ENCODE measurements at regions of chr7 and their contacts with region 1.

Region 1: GRCh38 chr7:2471396-2471795 is 4.8 kb downstream of the GRIFIN start:
- DNase-seq: no peak
- H3K4me3 ChIP-seq: no peak overlapping the region
- CTCF ChIP-seq: no peak

Region 2: GRCh38 chr7:2460188-2460587 is 11.2 kb before region 1 on chr7:
- CTCF ChIA-PET with region 1: interaction called, 117 read pairs
- POLR2A ChIA-PET with region 1: no interaction called
- DNase-seq: no peak
- H3K4me3 ChIP-seq: no peak overlapping the region
- CTCF ChIP-seq: no peak

Region 3: GRCh38 chr7:2482725-2483451 is 11.5 kb after region 1 on chr7:
- CTCF ChIA-PET with region 1: interaction called, 25 read pairs
- POLR2A ChIA-PET with region 1: no interaction called
- DNase-seq: no peak
- H3K4me3 ChIP-seq: no peak overlapping the region
- CTCF ChIP-seq: no peak